ENCODE measurements at regions of chr11 and their contacts with region 1.

Region 1: GRCh38 chr11:130390071-130390758 is 38.2 kb downstream of the ADAMTS8 start:
- DNase-seq: no peak
- ATAC-seq: peak in 3 of 4 donors; percentile 43 to 77 (median 68)
- H3K4me3 ChIP-seq: no peak overlapping the region
- H3K27ac ChIP-seq: peak overlapping the region in 1 of 12 donors; percentile 60
- H3K4me1 ChIP-seq: peaks cover 0 to 14% (median 9%) of the 10 kb centered on the region in 12 donors
- H3K27me3 ChIP-seq: no peaks in the 10 kb centered on the region
- CTCF ChIP-seq: peak in 8 of 12 donors; percentile 29 to 59 (median 44)
- POLR2A ChIP-seq: no peak

Region 2: DNA sequence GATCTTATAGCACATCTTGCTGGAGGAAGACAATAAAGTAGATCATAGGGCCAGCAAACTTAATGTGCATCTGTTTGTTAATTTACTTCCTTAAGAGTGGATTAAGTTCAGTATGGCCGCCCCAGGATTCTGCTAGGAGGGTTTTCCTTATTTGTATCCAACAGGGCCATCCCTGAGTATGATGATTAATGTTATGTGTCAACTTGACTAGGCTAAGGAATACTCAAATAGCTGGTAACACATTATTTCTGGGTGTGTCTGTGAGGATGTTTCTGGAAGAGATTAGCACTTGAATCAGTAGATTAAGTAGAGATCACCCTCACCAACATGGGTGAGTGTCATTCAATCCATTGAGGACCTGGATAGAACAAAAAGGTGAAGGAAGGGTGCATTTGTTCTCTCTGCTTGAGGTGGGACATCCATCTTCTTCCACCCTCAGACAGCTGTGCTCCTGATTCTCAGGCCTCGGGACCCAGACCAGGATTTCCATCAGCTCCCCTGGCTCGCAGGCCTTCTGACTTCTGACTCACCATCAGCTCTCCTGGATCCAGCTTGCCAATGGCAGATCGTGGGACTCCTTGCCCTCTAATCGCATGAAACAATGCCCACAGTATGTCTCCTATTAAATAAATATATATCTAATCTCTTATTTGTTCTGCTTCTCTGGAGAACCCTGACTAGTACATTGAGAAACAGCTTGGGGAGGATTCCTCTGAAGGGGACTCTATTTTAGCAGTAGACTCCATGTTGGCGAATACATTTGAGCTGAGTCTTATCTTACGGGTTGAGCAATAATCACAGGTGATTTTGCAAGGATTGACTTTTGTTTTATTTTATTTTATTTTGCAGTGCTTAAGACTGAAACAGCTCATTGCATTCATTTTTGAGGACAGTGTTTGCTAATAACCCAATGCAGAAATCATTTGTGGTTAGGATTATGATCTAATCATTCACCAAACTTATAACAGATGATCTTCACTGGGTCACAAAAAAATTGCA is 66.5 kb before region 1 on chr11:
- intact Hi-C with region 1: loop called in 1 of 10 experiments (anchors 5 kb)
- DNase-seq: no peak
- ATAC-seq: no peak
- H3K4me3 ChIP-seq: no peak overlapping the region
- H3K27ac ChIP-seq: no peak overlapping the region
- H3K4me1 ChIP-seq: no peaks in the 10 kb centered on the region
- H3K27me3 ChIP-seq: no peaks in the 10 kb centered on the region
- CTCF ChIP-seq: no peak
- POLR2A ChIP-seq: no peak

Region 3: GRCh38 chr11:130427581-130428315 is 37.5 kb after region 1 on chr11:
- intact Hi-C with region 1: loop called in 2 of 10 experiments (anchors 5 kb)
- DNase-seq: peak in 2 of 5 donors; percentile 38 to 65
- ATAC-seq: peak in 2 of 4 donors; percentile 9 to 32
- H3K4me3 ChIP-seq: peak overlapping the region in 11 of 12 donors; percentile 35 to 59 (median 50)
- H3K27ac ChIP-seq: peak overlapping the region in 1 of 12 donors; percentile 49
- H3K4me1 ChIP-seq: peaks cover 0 to 32% (median 14%) of the 10 kb centered on the region in 12 donors
- H3K27me3 ChIP-seq: peaks cover 0 to 55% (median 12%) of the 10 kb centered on the region in 9 donors
- CTCF ChIP-seq: peak in 6 of 12 donors; percentile 12 to 42 (median 27)
- POLR2A ChIP-seq: no peak

Measured in heart left ventricle (tissue), 16 donors.